Transverse colon (tissue), 4 donors: ENCODE measurements at regions of chr11 and their contacts with region 1.

Region 1: GRCh38 chr11:13183094-13183825 is 94.3 kb upstream of the BMAL1 start:
- DNase-seq: no peak
- H3K4me3 ChIP-seq: no peak overlapping the region
- H3K27ac ChIP-seq: no peak overlapping the region
- H3K4me1 ChIP-seq: peaks cover 0 to 9% (median 3%) of the 10 kb centered on the region in 4 donors
- H3K27me3 ChIP-seq: no peaks in the 10 kb centered on the region
- CTCF ChIP-seq: peak in 4 of 5 experiments; percentile 35 to 52 (median 41)
- EP300 ChIP-seq: no peak
- POLR2A ChIP-seq: no peak

Region 2: GRCh38 chr11:11463405-11463804 is 1719.9 kb before region 1 on chr11:
- in situ Hi-C with region 1: no loop called
- intact Hi-C with region 1: no loop called
- DNase-seq: no peak
- H3K4me3 ChIP-seq: no peak overlapping the region
- H3K27ac ChIP-seq: peak overlapping the region in 3 of 4 donors; percentile 6 to 60 (median 35)
- H3K4me1 ChIP-seq: peaks cover 0 to 32% (median 9%) of the 10 kb centered on the region in 4 donors
- H3K27me3 ChIP-seq: no peaks in the 10 kb centered on the region
- CTCF ChIP-seq: no peak
- EP300 ChIP-seq: no peak
- POLR2A ChIP-seq: no peak

Region 3: DNA sequence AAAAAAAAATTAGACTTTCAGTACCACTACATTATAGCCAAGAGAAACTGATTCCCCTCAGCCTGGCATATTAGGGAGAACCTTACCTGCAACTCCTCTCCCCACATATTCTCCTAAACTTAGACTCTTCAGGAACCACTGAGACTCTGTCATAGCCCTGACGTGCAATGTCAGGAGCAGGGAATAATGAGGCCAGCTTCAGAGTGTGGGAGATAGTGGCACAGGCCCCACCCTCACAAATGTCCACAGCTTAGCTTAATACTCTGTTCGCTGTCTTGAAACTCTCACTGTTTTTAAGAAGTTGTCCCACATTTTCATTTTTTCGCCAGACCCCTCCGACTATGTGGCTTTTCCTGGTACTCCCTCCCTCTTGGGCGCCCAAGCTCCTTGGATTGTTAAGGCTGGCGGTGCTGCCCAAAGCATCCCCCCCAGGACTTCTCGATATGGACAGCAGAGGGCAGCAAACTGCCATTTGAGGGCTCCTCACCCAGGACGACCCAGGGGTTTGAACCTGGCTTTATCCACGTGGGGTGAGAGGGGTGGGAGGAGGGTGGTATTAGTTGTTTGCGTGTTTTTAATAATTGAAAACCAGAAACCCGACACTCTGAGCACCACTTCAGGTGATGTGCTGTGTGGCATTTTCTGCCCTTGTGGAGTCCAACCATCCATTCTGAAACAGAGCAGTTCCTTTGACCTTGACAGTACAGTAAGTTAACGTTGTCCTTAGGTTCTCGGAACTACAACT is 219.3 kb before region 1 on chr11:
- in situ Hi-C with region 1: loop called in 2 of 4 experiments (anchors 10 kb)
- intact Hi-C with region 1: no loop called
- DNase-seq: peak; percentile 72
- H3K4me3 ChIP-seq: no peak overlapping the region
- H3K27ac ChIP-seq: no peak overlapping the region
- H3K4me1 ChIP-seq: no peaks in the 10 kb centered on the region
- H3K27me3 ChIP-seq: no peaks in the 10 kb centered on the region
- CTCF ChIP-seq: peak; percentile 83 to 89 (median 86)
- EP300 ChIP-seq: no peak
- POLR2A ChIP-seq: no peak